ENCODE measurements at regions of chr15 and their contacts with region 1.

Region 1: DNA sequence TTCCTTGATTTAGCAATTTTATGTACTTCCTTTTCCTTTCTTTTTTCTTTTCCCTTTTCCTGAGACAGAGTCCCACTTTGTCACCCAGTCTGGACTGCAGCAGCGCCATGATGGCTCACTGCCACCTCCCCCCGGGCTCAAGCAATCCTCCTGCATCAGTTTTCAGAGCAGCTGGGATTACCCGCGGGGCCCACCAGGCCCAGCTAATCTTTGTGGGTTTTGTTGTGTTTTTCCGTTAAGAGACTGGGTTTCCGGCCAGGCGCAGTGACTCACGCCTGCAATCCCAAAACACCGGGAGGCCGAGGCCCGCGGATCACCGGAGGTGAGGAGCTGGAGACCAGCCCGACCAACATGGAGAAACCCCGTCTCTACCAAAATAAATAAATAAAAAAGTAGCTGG is 17.7 kb downstream of the GOLGA8S start:
- DNase-seq: peak; percentile 12 to 68
- H3K4me3 ChIP-seq: no peak overlapping the region
- H3K27ac ChIP-seq: peak overlapping the region; percentile 66 to 67
- H3K4me1 ChIP-seq: peaks cover 2 to 19% of the 10 kb centered on the region in 2 donors
- H3K27me3 ChIP-seq: no peaks in the 10 kb centered on the region
- CTCF ChIP-seq: no peak

Region 2: DNA sequence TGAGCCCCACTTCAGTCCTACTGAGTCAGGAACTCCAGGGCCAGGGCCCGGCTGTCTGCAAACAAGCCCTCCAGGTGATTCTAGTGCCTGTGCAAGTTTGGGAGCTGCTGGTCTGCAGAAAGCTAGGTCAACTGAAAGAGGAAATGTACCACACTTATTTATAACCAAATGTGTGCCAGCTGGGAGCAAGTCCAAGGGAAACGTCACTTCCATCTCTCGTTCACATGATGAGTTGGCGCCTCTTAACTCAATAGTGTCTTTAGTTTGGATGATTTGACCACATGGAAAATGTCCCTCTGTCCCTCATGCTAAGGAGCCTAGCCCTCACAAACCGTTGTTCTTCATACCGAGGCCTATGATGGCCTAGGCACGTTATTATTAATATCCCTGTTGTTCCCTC is 25.5 kb after region 1 on chr15:
- intact Hi-C with region 1: loop called (anchors 2 kb)
- DNase-seq: peak in 1 of 2 donors; percentile 82
- H3K4me3 ChIP-seq: no peak overlapping the region
- H3K27ac ChIP-seq: peak overlapping the region; percentile 90 to 92
- H3K4me1 ChIP-seq: peaks cover 5 to 33% of the 10 kb centered on the region in 2 donors
- H3K27me3 ChIP-seq: no peaks in the 10 kb centered on the region
- CTCF ChIP-seq: no peak

Region 3: GRCh38 chr15:23422946-23423708 is 50.8 kb after region 1 on chr15:
- intact Hi-C with region 1: loop called (anchors 5 kb)
- DNase-seq: peak in 1 of 2 donors; percentile 64
- H3K4me3 ChIP-seq: no peak overlapping the region
- H3K27ac ChIP-seq: peak overlapping the region; percentile 71 to 86
- H3K4me1 ChIP-seq: peaks cover 6 to 14% of the 10 kb centered on the region in 2 donors
- H3K27me3 ChIP-seq: no peaks in the 10 kb centered on the region
- CTCF ChIP-seq: no peak

Measured in ascending aorta (tissue), 2 donors.